Prostate gland (tissue), 2 donors: ENCODE measurements at regions of chr11 and their contacts with region 1.

Region 1: DNA sequence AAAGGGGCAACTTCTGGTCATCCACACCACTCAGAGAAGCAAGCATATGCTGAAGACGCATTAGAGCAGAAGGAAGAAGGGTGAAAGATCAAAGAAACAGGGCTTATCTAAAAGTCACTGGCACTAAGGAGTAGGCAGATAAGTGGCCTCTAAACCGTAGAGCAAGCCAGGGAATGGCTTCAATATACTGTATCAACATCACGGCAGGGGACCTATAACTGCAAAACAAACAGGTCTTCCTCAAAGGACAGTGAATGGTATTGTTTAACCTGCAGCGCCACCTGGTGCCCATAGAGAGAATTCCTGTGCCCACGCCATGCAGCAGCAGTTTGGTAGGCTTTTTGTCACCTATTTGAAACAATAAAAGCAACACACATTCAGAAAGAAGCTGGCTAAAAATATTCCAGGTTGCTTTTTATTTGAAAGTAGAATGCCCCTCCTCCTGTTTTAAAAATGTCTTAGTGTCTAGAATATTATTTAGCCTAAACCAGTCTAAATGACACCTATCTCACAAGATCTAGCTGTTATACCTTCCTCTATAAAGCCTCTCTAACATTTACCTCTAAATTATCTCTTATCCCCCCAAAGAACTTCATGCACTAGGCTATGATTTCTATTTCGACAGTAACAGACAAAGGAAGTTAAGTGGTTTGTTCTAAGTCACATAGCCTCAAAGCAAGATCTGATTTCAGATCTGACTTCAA is 21.8 kb downstream of the SNX19 start:
- DNase-seq: peak; percentile 76
- H3K4me3 ChIP-seq: no peak overlapping the region
- H3K27ac ChIP-seq: peak overlapping the region in 1 of 2 donors; percentile 24
- H3K4me1 ChIP-seq: no peaks in the 10 kb centered on the region
- H3K27me3 ChIP-seq: no peaks in the 10 kb centered on the region
- CTCF ChIP-seq: peak; percentile 57 to 92 (median 90)
- POLR2A ChIP-seq: no peak

Region 2: GRCh38 chr11:130213143-130213978 is 681.1 kb before region 1 on chr11:
- intact Hi-C with region 1: loop called (anchors 10 kb)
- DNase-seq: peak; percentile 39
- H3K4me3 ChIP-seq: no peak overlapping the region
- H3K27ac ChIP-seq: no peak overlapping the region
- H3K4me1 ChIP-seq: no peaks in the 10 kb centered on the region
- H3K27me3 ChIP-seq: no peaks in the 10 kb centered on the region
- CTCF ChIP-seq: peak; percentile 84 to 89 (median 87)
- POLR2A ChIP-seq: no peak

Region 3: GRCh38 chr11:130314750-130315285 is 579.7 kb before region 1 on chr11 and contains the start of gene ZBTB44:
- intact Hi-C with region 1: loop called (anchors 10 kb)
- DNase-seq: peak; percentile 92
- H3K4me3 ChIP-seq: peak within 1 kb of the TSS; percentile 80 to 87
- H3K27ac ChIP-seq: peak within 1 kb of the TSS; percentile 93 to 97
- H3K4me1 ChIP-seq: no peaks in the 10 kb centered on the region
- H3K27me3 ChIP-seq: no peaks in the 10 kb centered on the region
- CTCF ChIP-seq: no peak
- POLR2A ChIP-seq: peak; percentile 66
- total RNA-seq, gene ZBTB44: 35.9 to 80.3 TPM

Region 4: DNA sequence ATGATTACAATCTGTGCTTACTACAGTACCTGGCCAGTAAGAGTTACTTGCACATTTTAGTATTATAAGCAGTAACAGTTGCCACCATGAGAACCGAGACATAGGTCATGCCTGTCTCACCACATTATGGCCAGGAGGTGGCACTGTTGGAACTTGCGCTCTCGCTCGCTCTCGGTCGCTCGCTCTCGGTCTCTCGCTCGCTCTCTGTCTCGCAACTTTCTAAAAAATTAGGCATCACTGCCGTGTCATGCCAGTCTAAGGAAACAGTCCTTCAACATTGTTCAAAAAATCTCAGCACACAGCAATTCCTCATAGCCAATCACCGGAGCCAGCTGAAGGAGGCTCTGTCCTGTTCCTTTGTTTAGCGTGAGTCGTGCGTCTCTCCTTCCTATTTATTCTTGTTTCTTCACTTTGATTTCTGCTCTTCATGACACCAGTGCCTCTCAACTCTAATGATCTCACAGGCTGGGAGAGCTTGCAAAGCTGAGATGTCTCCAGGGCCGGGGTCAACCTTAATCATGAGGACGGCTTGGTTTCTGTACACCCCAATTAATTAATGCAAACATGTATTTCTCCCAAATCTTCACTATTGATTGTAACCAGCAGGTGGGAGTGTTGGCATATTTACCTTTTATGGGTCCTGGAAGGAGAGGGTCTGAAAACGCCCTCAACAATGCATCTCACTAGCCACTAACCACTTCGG is 459.8 kb before region 1 on chr11:
- intact Hi-C with region 1: loop called (anchors 1 kb)
- DNase-seq: peak; percentile 75
- H3K4me3 ChIP-seq: peak overlapping the region; percentile 33 to 40
- H3K27ac ChIP-seq: peak overlapping the region; percentile 68 to 70
- H3K4me1 ChIP-seq: no peaks in the 10 kb centered on the region
- H3K27me3 ChIP-seq: no peaks in the 10 kb centered on the region
- CTCF ChIP-seq: peak; percentile 36 to 93 (median 74)
- POLR2A ChIP-seq: no peak

Region 5: GRCh38 chr11:130671801-130672700 is 222.4 kb before region 1 on chr11:
- intact Hi-C with region 1: loop called (anchors 10 kb)
- DNase-seq: no peak
- H3K4me3 ChIP-seq: no peak overlapping the region
- H3K27ac ChIP-seq: no peak overlapping the region
- H3K4me1 ChIP-seq: no peaks in the 10 kb centered on the region
- H3K27me3 ChIP-seq: no peaks in the 10 kb centered on the region
- CTCF ChIP-seq: no peak
- POLR2A ChIP-seq: no peak

Region 6: GRCh38 chr11:130861902-130862860 is 32.3 kb before region 1 on chr11:
- intact Hi-C with region 1: loop called (anchors 2 kb)
- DNase-seq: peak; percentile 86
- H3K4me3 ChIP-seq: no peak overlapping the region
- H3K27ac ChIP-seq: peak overlapping the region in 1 of 2 donors; percentile 1
- H3K4me1 ChIP-seq: no peaks in the 10 kb centered on the region
- H3K27me3 ChIP-seq: no peaks in the 10 kb centered on the region
- CTCF ChIP-seq: peak; percentile 100
- POLR2A ChIP-seq: no peak